ENCODE measurements at regions of chr1 and their contacts with region 1.

Region 1: GRCh38 chr1:220294846-220295301 is 22.6 kb upstream of the RAB3GAP2 start:
- DNase-seq: no peak
- CTCF ChIP-seq: no peak

Region 2: GRCh38 chr1:220281159-220281574 is 13.7 kb before region 1 on chr1:
- CTCF ChIA-PET with region 1: interaction called, 140 read pairs
- POLR2A ChIA-PET with region 1: no interaction called
- DNase-seq: no peak
- CTCF ChIP-seq: peak; percentile 12

Region 3: GRCh38 chr1:220307607-220308006 is 12.7 kb after region 1 on chr1:
- CTCF ChIA-PET with region 1: interaction called, 10 read pairs
- POLR2A ChIA-PET with region 1: no interaction called
- DNase-seq: no peak
- CTCF ChIP-seq: no peak

Region 4: GRCh38 chr1:220315070-220315839 is 20.4 kb after region 1 on chr1:
- CTCF ChIA-PET with region 1: interaction called, 13 read pairs
- POLR2A ChIA-PET with region 1: no interaction called
- DNase-seq: no peak
- CTCF ChIP-seq: no peak

Region 5: GRCh38 chr1:220330265-220330664 is 35.4 kb after region 1 on chr1:
- CTCF ChIA-PET with region 1: interaction called, 12 read pairs
- POLR2A ChIA-PET with region 1: no interaction called
- DNase-seq: no peak
- CTCF ChIP-seq: no peak

Region 6: GRCh38 chr1:220432425-220432824 is 137.6 kb after region 1 on chr1:
- CTCF ChIA-PET with region 1: interaction called, 10 read pairs
- POLR2A ChIA-PET with region 1: no interaction called
- DNase-seq: no peak
- CTCF ChIP-seq: no peak